Astrocyte of the cerebellum (primary cell): ENCODE measurements at regions of chr15 and their contacts with region 1.

Region 1: GRCh38 chr15:79455361-79455760 is 23.2 kb downstream of the MINAR1 start:
- DNase-seq: no peak
- H3K4me3 ChIP-seq: no peak overlapping the region
- CTCF ChIP-seq: no peak

Region 2: GRCh38 chr15:79494963-79495746 is 39.8 kb after region 1 on chr15:
- in situ Hi-C with region 1: loop called (anchors 5 kb)
- DNase-seq: no peak
- H3K4me3 ChIP-seq: no peak overlapping the region
- CTCF ChIP-seq: no peak

Region 3: GRCh38 chr15:79505956-79506355 is 50.6 kb after region 1 on chr15:
- in situ Hi-C with region 1: no loop called
- DNase-seq: no peak
- H3K4me3 ChIP-seq: no peak overlapping the region
- CTCF ChIP-seq: no peak